Activated CD4-positive, alpha-beta memory T cell treated with anti-CD3 and anti-CD28 coated beads, Interleukin-2, amount 10 ng/mL, durations not matched to agents 7 days and 5 days (primary cell): ENCODE measurements at regions of chr14 and their contacts with region 1.

Region 1: DNA sequence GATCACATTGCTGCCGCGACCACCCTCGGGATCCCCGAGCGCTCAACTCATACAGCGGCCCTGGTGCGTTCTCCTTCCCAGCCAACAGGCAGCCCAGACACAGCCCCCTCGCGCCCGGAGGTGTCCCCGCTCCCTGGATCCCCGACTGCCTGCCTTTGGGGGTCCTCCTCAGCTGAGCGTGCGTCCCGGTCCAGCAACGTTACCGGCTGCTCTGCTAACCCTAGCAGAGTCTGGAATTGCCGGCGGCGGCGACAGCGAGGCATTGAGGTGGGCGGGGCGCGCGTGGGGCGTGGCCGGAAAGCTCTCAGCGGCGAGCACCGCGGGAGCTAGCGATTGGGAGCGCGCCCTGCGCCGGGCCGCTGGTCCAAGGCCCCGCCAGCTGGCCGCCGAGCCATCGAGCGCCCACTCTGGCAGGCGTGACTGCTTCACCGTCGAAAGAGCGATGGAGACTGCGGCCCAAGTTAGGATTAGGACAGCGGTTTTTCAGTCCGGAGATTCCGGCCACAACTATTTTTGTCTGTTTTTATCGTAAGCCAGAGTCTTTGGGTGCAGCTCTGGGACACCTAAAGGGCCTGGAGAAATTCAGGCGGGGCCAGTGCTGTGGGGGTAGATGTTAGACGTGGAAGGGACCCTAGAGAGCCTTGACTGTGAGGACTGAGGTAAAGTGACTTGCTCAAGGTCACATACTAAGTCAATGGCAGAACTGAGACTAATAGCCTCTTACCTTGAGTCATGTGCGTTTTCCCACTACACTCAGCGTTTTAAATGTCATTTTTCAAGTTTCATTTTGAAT is at the start of gene HEATR5A:
- DNase-seq: peak; percentile 93
- H3K4me3 Mint-ChIP-seq: peak within 1 kb of the TSS; percentile 99
- H3K27ac Mint-ChIP-seq: peak within 1 kb of the TSS; percentile 77
- H3K4me1 Mint-ChIP-seq: peaks cover 19% of the 10 kb centered on the region
- H3K27me3 Mint-ChIP-seq: peaks cover 3% of the 10 kb centered on the region
- total RNA-seq, gene HEATR5A: 9.4 to 12.5 TPM

Region 2: GRCh38 chr14:31449971-31450610 is 29.6 kb after region 1 on chr14:
- CTCF ChIA-PET with region 1: interaction called, 14 read pairs
- POLR2A ChIA-PET with region 1: interaction called, 6 read pairs
- DNase-seq: no peak
- H3K4me3 Mint-ChIP-seq: no peak overlapping the region
- H3K27ac Mint-ChIP-seq: no peak overlapping the region
- H3K4me1 Mint-ChIP-seq: peaks cover 5% of the 10 kb centered on the region
- H3K27me3 Mint-ChIP-seq: no peaks in the 10 kb centered on the region